Posterior cingulate gyrus (tissue), 11 donors: ENCODE measurements at regions of chr3 and their contacts with region 1.

Region 1: DNA sequence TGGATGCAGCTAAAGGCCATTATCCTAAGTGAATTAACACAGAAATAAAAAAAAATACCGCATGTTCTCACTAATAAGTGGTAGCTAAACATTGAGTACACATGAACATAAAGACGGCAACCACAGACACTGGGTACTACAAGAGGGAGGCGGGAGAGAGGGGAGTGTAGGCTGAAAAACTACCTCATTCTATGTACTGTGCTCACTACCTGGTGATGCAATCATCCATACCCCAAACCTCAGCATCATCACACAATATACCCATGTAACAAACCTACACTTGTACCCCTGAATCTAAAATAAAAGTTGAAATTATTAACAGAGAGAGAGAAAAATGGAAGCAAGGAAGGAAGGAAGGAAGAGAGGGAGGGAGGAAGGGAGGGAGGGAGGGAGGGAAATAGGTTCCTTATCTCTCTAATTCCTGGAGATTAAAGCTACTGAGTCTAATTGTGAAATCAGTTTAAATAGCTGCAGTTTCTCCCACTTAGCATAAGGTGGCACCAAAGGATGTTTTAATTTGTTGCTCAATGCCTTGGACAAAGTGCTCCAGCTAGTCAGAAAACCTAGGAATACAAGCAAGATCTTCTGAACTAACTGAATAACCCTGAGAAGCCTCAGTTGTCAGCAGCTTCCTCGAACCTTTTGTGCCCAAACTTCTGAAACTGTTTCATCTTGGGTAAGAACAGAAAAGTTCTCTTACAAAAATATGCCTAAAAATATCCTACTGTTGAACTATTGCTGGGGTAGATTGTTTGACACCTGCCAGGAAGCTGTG is 79.4 kb upstream of the ATP11B start:
- DNase-seq: no peak

Region 2: GRCh38 chr3:182465301-182466185 is 248.4 kb before region 1 on chr3:
- intact Hi-C with region 1: no loop called
- DNase-seq: no peak

Region 3: GRCh38 chr3:182837855-182838454 is 124.0 kb after region 1 on chr3:
- intact Hi-C with region 1: loop called (anchors 5 kb)
- DNase-seq: no peak

Region 4: GRCh38 chr3:183224180-183224970 is 510.4 kb after region 1 on chr3:
- intact Hi-C with region 1: no loop called
- DNase-seq: no peak

Region 5: DNA sequence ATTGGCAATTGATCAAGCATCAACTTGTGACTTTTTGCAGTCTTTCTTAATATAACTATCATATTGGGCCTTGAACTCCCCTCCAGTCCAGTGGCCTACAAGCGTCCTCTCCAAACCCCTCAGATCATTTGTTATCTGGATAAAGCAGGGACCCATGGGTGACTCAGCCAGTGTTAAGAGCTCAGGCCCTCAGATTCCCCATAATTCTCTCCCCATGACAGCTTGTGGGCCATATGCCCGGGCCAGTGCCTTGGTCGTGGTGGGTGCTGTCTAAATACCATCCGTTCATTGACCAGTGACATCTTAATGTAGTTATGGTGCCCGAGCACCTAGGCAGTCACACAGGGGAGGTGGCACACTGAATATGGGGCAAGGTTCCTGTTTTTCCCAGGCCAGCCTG is 696.4 kb after region 1 on chr3:
- intact Hi-C with region 1: no loop called
- DNase-seq: no peak